ENCODE measurements at regions of chr2 and their contacts with region 1.

Region 1: DNA sequence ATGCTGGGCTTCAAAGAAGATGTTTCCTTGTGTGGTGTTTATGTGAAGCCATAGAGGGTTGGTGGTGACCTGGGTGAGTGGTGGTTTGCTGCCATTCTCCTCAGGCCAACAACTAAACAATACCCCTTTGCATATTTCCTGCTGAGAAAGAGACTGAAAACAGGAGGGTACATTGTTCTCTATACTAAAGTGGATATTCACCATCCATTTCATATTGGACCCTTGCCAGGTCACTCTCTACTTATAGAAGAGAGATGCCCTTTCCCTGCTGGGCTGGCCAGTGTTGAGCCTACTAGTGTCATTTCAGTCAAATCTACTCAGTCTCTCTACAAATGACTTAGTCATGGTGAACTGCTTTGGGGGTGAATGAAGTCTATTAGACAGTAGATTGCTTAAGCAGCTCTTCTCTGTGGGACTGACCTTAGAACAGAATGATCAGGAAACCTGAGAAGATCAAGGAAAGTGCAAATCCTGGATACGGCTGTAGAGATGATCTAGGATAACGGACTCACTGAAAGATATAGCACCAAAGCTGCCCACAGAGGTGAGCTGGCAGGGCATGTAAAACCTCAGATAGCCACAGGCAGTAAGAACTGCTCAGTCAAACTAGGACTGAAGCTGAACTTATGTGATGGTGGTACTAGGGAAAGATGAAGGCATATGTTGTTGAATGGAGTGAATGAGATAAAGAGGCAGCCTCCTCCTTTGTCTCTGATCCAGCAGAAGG is 154.9 kb downstream of the MYO3B start:
- DNase-seq: no peak
- H3K4me3 ChIP-seq: no peak overlapping the region
- H3K27ac ChIP-seq: no peak overlapping the region
- H3K4me1 ChIP-seq: no peaks in the 10 kb centered on the region
- H3K27me3 ChIP-seq: peaks cover 5% of the 10 kb centered on the region
- CTCF ChIP-seq: no peak
- EP300 ChIP-seq: no peak
- POLR2A ChIP-seq: no peak

Region 2: DNA sequence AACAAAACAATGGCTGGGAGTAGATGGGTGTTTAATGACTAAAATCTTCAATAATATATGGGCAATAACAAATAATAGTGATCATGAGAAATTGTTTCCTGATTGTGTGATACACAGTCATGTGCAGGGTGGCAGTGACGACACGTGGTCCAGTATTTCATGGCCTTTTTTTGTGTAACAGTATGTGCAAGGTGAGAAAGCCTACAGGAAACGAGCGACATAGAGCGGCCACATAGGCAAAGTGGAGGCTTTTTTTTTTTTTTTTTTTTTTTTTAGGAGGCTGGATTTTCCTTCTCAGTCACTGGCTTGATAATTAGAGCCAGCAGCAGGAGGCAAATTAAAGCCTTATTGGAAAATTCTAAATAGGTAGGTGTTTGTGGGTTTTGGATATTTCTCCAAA is 31.2 kb before region 1 on chr2:
- in situ Hi-C with region 1: no loop called
- intact Hi-C with region 1: loop called (anchors 1 kb)
- DNase-seq: no peak
- H3K4me3 ChIP-seq: no peak overlapping the region
- H3K27ac ChIP-seq: no peak overlapping the region
- H3K4me1 ChIP-seq: peaks cover 0 to 8% (median 1%) of the 10 kb centered on the region in 4 donors
- H3K27me3 ChIP-seq: no peaks in the 10 kb centered on the region
- CTCF ChIP-seq: no peak
- EP300 ChIP-seq: no peak
- POLR2A ChIP-seq: no peak

Measured in transverse colon (tissue), 4 donors.